CD4-positive, alpha-beta memory T cell (primary cell): ENCODE measurements at regions of chr9 and their contacts with region 1.

Region 1: DNA sequence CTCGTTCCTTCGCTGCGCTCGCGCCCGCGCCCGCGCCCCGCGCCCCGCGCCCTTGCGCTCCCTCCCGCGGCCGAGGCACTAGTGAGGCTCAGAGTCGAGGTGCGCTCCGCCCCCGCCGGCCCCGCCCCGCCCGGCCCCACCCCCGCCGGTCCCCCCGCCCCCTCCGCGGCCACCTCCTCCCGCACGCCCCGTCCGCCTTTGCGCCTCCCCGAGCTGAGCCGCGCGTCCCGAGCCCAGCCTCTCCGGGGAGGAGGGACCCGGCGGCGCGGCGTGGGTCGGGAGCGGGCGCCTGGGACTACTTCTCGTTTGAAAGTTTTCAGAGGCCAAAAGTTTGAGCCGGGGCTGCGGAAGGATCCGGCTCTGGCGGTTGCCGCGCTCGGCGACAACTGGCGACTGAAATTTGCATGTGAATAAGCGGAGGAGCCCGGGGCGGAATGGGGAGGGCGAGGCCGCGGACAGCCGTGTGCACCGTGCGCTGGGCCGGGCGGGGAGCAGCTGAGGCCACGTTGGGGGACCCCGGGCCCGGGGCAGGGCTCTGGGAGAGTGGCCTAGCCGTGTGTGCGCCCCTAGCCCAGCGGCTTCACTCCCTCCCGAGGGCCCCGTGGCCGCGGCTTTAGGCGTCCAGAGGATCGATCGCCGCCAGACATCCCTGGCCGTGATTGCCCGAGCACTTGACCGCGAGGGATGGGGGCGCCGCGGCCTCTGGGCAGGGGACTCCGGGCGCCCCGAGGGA is at the start of gene NOTCH1:
- DNase-seq: peak; percentile 84 to 87 (median 85)
- H3K4me3 ChIP-seq: peak within 1 kb of the TSS; percentile 38 to 77
- H3K4me3 Mint-ChIP-seq: peak within 1 kb of the TSS; percentile 85 to 90 (median 88)
- H3K27ac ChIP-seq: peak within 1 kb of the TSS; percentile 60
- H3K27ac Mint-ChIP-seq: peak within 1 kb of the TSS; percentile 64 to 94 (median 86)
- H3K4me1 ChIP-seq: peaks cover 38% of the 10 kb centered on the region
- H3K4me1 Mint-ChIP-seq: peaks cover 5 to 32% (median 21%) of the 10 kb centered on the region in 4 donors
- H3K27me3 ChIP-seq: no peaks in the 10 kb centered on the region
- H3K27me3 Mint-ChIP-seq: no peaks in the 10 kb centered on the region
- total RNA-seq, gene NOTCH1: 43.0 to 45.4 TPM

Region 2: GRCh38 chr9:136533775-136534157 is 12.4 kb before region 1 on chr9:
- CTCF ChIA-PET with region 1: interaction called, 3 read pairs
- POLR2A ChIA-PET with region 1: interaction called, 29 read pairs
- intact Hi-C with region 1: loop called (anchors 2 kb)
- DNase-seq: peak; percentile 48 to 85 (median 58)
- H3K4me3 ChIP-seq: peak overlapping the region; percentile 8 to 54
- H3K4me3 Mint-ChIP-seq: peak overlapping the region; percentile 74 to 90 (median 78)
- H3K27ac ChIP-seq: peak overlapping the region; percentile 66
- H3K27ac Mint-ChIP-seq: peak overlapping the region; percentile 81 to 93 (median 90)
- H3K4me1 ChIP-seq: peaks cover 93% of the 10 kb centered on the region
- H3K4me1 Mint-ChIP-seq: peaks cover 20 to 64% (median 41%) of the 10 kb centered on the region in 4 donors
- H3K27me3 ChIP-seq: no peaks in the 10 kb centered on the region
- H3K27me3 Mint-ChIP-seq: no peaks in the 10 kb centered on the region

Region 3: DNA sequence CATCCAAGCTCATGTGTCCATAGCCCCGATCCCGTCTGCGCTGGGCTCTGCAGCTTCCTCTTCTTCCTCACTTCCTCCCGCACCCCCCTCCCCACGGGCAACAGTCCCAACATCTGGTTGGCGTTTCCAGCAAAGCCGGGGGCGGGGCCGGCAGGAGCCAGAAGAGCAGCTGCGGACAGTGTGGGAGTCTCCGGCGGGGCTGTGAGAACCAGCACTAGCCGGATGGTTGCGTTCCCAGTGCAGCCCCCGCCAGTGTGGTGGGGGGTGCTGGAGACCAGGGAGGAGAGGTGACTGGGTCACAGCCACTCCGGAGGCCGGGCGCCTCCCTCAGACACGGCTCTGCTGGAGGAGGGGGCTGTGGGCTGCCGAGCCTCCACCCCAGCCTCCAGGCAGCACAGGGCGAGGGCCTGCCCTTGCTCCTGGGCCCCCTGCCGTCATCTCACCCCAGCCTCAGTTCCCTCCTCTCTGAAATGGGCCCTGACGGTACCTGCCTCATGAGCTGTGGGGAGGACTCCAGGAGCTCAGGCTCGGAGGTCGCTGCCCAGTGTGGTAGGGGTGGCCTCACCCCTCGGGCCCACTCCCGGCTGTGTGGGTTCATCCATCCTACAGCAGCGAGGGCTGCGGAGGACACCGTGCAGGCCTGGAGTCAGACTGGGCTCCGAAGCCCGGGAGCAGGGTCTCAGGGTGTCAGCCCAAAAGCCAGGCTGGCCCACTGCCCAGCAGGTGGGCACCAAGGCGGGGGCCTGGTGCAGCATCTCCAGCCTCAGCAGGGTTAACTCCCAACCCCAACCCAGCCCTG is 41.2 kb after region 1 on chr9:
- CTCF ChIA-PET with region 1: no interaction called
- POLR2A ChIA-PET with region 1: no interaction called
- intact Hi-C with region 1: no loop called
- DNase-seq: no peak
- H3K4me3 ChIP-seq: no peak overlapping the region
- H3K4me3 Mint-ChIP-seq: no peak overlapping the region
- H3K27ac ChIP-seq: no peak overlapping the region
- H3K27ac Mint-ChIP-seq: no peak overlapping the region
- H3K4me1 ChIP-seq: peaks cover 12% of the 10 kb centered on the region
- H3K4me1 Mint-ChIP-seq: peaks cover 3 to 14% (median 7%) of the 10 kb centered on the region in 4 donors
- H3K27me3 ChIP-seq: no peaks in the 10 kb centered on the region
- H3K27me3 Mint-ChIP-seq: peaks cover 0 to 2% of the 10 kb centered on the region in 2 donors

Region 4: DNA sequence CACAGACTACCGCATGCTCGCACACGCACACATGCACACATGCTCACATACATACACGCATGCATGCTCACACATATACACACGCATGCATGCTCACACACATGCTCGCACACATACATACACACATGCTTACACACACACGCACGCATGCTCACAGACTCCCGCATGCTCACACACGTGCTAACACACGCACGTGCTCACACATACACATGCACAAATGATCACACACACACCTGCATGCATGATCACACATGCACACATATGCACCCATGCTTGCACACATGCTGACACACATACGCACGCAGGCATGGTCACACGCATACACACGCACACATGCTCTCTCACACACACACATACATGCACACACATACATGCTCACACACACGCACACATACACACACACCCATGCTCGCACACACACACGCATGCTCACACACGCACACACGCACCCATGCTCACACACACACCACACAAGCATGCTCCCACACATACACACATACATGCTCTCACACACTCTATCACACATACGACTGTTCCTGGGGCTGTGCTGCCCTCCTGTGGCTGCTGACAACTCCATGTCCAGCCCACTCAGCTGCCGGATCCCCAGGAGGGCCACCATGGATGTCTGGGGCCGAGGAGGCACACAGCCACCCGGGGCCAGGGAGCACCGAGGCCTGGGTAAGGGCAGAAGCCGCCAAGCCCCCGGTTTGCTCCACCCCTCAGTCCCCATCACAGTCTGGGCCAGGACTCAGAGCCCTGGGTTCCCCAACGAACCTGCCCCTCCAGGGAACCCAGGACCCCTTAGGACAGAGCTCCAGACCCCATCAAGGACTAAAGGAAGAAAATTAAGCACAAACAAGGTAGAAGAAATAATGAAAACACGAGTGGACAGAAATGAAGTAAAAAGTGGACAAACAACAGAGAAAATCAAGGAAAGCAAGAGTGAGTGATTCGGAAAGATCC is 85.2 kb after region 1 on chr9:
- CTCF ChIA-PET with region 1: interaction called, 8 read pairs
- POLR2A ChIA-PET with region 1: no interaction called
- intact Hi-C with region 1: loop called (anchors 2 kb)
- DNase-seq: peak; percentile 79 to 84 (median 81)
- H3K4me3 ChIP-seq: no peak overlapping the region
- H3K4me3 Mint-ChIP-seq: no peak overlapping the region
- H3K27ac ChIP-seq: no peak overlapping the region
- H3K27ac Mint-ChIP-seq: no peak overlapping the region
- H3K4me1 ChIP-seq: peaks cover 6% of the 10 kb centered on the region
- H3K4me1 Mint-ChIP-seq: peaks cover 0 to 3% (median 1%) of the 10 kb centered on the region in 4 donors
- H3K27me3 ChIP-seq: no peaks in the 10 kb centered on the region
- H3K27me3 Mint-ChIP-seq: peaks cover 0 to 3% of the 10 kb centered on the region in 2 donors